ENCODE measurements at regions of chr6 and their contacts with region 1.

Region 1: DNA sequence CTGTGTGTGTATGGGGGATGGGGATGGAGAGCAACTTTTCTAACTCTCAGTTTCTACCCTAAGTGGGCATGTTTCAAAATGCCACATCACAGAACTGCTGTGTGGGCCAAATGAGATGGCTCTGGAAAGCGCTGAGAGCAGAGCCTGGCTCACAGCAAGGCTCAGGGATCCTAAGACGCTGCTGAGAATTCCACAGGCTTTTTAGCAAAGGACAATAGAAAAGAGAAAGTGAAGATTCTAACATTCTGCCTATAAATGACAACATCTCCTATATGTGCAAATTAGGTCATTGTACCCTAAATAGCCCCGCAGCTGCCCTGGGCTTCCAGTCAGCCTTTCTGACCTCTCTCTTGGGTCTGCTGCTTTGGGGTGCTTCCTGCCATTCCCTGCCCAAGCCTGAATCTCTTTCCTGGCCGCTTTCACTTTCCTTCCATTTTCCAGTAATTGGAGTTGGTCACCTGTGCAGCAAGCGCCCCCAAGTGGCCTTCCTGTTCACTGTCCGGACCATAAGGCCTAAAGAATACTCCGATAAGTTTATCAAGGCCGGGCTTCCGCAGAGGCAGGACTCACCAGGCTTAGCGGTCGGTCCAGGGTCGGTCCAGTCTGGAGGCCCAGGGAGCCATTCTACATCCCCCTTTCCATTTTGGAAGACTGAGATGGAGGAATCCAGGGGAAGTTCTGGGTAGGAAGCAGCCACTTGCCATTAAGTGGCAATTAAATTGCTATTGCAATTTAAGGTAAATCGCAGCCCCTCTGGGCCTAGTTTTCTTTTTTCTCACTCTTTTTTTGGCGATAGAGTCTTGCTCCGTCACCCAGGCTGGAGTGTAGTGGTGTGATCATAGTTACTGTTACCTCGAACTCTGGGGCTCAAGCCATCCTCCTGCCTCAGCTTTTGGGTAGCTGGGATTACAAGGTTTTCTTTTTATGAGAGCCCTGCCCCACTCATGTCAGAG is 6.6 kb upstream of the DDR1 start:
- DNase-seq: peak; percentile 62 to 71 (median 68)
- H3K4me3 ChIP-seq: peak overlapping the region; percentile 40 to 43
- H3K4me3 Mint-ChIP-seq: peak overlapping the region; percentile 61 to 91 (median 82)
- H3K27ac ChIP-seq: no peak overlapping the region
- H3K27ac Mint-ChIP-seq: peak overlapping the region in 6 of 7 donors; percentile 21 to 91 (median 72)
- H3K4me1 ChIP-seq: peaks cover 10% of the 10 kb centered on the region
- H3K4me1 Mint-ChIP-seq: peaks cover 7 to 27% (median 11%) of the 10 kb centered on the region in 4 donors
- H3K27me3 ChIP-seq: no peaks in the 10 kb centered on the region
- H3K27me3 Mint-ChIP-seq: no peaks in the 10 kb centered on the region

Region 2: GRCh38 chr6:30678964-30679726 is 198.6 kb before region 1 on chr6:
- CTCF ChIA-PET with region 1: interaction called, 5 read pairs
- POLR2A ChIA-PET with region 1: interaction called, 4 read pairs
- intact Hi-C with region 1: loop called (anchors 1 kb)
- DNase-seq: peak; percentile 87 to 92 (median 89)
- H3K4me3 ChIP-seq: peak overlapping the region; percentile 70 to 93
- H3K4me3 Mint-ChIP-seq: peak overlapping the region; percentile 97 to 100 (median 99)
- H3K27ac ChIP-seq: peak overlapping the region; percentile 94
- H3K27ac Mint-ChIP-seq: peak overlapping the region; percentile 88 to 99 (median 91)
- H3K4me1 ChIP-seq: peaks cover 38% of the 10 kb centered on the region
- H3K4me1 Mint-ChIP-seq: peaks cover 17 to 57% (median 34%) of the 10 kb centered on the region in 4 donors
- H3K27me3 ChIP-seq: no peaks in the 10 kb centered on the region
- H3K27me3 Mint-ChIP-seq: no peaks in the 10 kb centered on the region

Region 3: GRCh38 chr6:30776390-30777154 is 101.1 kb before region 1 on chr6:
- CTCF ChIA-PET with region 1: no interaction called
- POLR2A ChIA-PET with region 1: no interaction called
- intact Hi-C with region 1: no loop called
- DNase-seq: no peak
- H3K4me3 ChIP-seq: no peak overlapping the region
- H3K4me3 Mint-ChIP-seq: no peak overlapping the region
- H3K27ac ChIP-seq: no peak overlapping the region
- H3K27ac Mint-ChIP-seq: no peak overlapping the region
- H3K4me1 ChIP-seq: no peaks in the 10 kb centered on the region
- H3K4me1 Mint-ChIP-seq: peaks cover 1 to 18% (median 9%) of the 10 kb centered on the region in 4 donors
- H3K27me3 ChIP-seq: no peaks in the 10 kb centered on the region
- H3K27me3 Mint-ChIP-seq: no peaks in the 10 kb centered on the region

Region 4: DNA sequence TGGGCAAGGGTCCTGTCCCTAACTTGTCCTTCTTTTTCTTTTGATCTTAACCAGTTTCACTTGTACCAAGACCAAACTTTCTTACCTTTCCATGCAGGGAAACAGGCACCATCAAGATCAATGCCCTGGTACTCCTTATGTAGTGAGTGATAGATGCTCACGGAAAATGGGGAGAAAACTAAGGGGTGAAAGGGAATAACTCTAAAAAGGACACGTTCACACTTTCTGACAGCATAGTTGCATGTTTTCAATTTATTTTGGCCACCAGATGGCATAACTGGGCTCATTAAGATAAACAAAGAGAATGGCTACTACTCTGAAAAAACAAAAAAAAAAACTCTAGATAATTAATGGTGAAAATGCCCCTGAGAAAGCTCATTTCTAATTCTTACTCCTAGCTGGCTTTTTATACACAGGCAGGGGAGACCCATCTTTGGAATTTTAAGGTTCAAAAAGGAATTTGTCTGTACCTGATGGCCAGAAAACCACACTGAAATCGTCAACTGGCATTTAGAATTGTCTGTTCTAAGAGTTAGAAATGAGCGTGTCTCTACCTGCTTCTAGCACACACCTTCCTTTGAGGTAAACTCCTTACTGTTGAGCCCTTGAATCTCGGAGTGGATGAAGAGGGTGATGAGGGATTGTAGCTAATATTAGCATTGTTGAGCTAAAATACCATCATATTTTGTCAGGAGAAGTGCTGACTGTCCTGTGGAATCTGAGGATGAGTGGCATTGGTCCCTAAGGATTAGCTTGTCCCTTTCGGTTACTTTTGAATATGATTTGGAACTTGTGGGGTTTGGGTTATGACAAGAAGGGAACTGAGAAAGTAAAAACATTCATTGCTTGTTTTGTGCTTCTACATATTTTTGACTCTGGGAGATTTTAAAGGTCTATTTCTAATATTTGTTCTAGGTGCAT is 55.6 kb before region 1 on chr6:
- CTCF ChIA-PET with region 1: interaction called, 262 read pairs
- POLR2A ChIA-PET with region 1: interaction called, 3 read pairs
- intact Hi-C with region 1: loop called (anchors 1 kb)
- DNase-seq: peak in 3 of 5 donors; percentile 26 to 38 (median 37)
- H3K4me3 ChIP-seq: no peak overlapping the region
- H3K4me3 Mint-ChIP-seq: peak overlapping the region in 1 of 8 donors; percentile 23
- H3K27ac ChIP-seq: no peak overlapping the region
- H3K27ac Mint-ChIP-seq: peak overlapping the region; percentile 39 to 83 (median 65)
- H3K4me1 ChIP-seq: peaks cover 46% of the 10 kb centered on the region
- H3K4me1 Mint-ChIP-seq: peaks cover 48 to 87% (median 61%) of the 10 kb centered on the region in 4 donors
- H3K27me3 ChIP-seq: no peaks in the 10 kb centered on the region
- H3K27me3 Mint-ChIP-seq: no peaks in the 10 kb centered on the region

Region 5: GRCh38 chr6:30942338-30943060 is 64.8 kb after region 1 on chr6:
- CTCF ChIA-PET with region 1: no interaction called
- POLR2A ChIA-PET with region 1: no interaction called
- intact Hi-C with region 1: no loop called
- DNase-seq: no peak
- H3K4me3 ChIP-seq: no peak overlapping the region
- H3K4me3 Mint-ChIP-seq: no peak overlapping the region
- H3K27ac ChIP-seq: no peak overlapping the region
- H3K27ac Mint-ChIP-seq: no peak overlapping the region
- H3K4me1 ChIP-seq: no peaks in the 10 kb centered on the region
- H3K4me1 Mint-ChIP-seq: peaks cover 0 to 3% (median 0%) of the 10 kb centered on the region in 4 donors
- H3K27me3 ChIP-seq: peaks cover 20% of the 10 kb centered on the region
- H3K27me3 Mint-ChIP-seq: peaks cover 31 to 59% of the 10 kb centered on the region in 2 donors

Region 6: GRCh38 chr6:30981942-30982772 is 104.5 kb after region 1 on chr6:
- CTCF ChIA-PET with region 1: no interaction called
- POLR2A ChIA-PET with region 1: no interaction called
- intact Hi-C with region 1: no loop called
- DNase-seq: no peak
- H3K4me3 ChIP-seq: no peak overlapping the region
- H3K4me3 Mint-ChIP-seq: peak overlapping the region in 1 of 8 donors; percentile 13
- H3K27ac ChIP-seq: no peak overlapping the region
- H3K27ac Mint-ChIP-seq: peak overlapping the region in 1 of 7 donors; percentile 10
- H3K4me1 ChIP-seq: no peaks in the 10 kb centered on the region
- H3K4me1 Mint-ChIP-seq: peaks cover 0 to 2% (median under 1%) of the 10 kb centered on the region in 4 donors
- H3K27me3 ChIP-seq: no peaks in the 10 kb centered on the region
- H3K27me3 Mint-ChIP-seq: peaks cover 29 to 33% of the 10 kb centered on the region in 2 donors

Region 7: DNA sequence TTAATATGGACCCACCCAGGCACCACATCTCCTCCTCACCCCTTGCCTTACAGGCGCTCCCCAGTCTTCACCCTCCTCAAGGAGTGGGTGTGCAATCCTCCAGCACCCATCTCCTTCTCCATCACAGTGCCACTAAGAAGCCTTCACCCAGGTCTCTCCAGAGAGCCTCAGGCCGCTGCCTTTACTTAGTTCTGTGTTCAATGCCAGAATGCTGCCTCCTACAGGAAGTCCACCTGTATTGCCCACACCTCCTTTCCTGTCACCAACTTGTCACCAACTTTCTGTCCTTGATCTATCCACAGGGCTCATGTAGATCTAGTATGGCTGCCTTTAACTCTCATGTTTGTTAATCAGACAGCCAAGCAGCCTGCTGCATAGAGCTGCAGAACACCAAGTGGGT is 707.8 kb after region 1 on chr6:
- CTCF ChIA-PET with region 1: no interaction called
- POLR2A ChIA-PET with region 1: no interaction called
- intact Hi-C with region 1: no loop called
- DNase-seq: peak; percentile 56 to 66 (median 56)
- H3K4me3 ChIP-seq: peak overlapping the region; percentile 7 to 17
- H3K4me3 Mint-ChIP-seq: peak overlapping the region; percentile 74 to 91 (median 83)
- H3K27ac ChIP-seq: peak overlapping the region; percentile 62
- H3K27ac Mint-ChIP-seq: peak overlapping the region; percentile 92 to 98 (median 96)
- H3K4me1 ChIP-seq: peaks cover 74% of the 10 kb centered on the region
- H3K4me1 Mint-ChIP-seq: peaks cover 39 to 97% (median 62%) of the 10 kb centered on the region in 4 donors
- H3K27me3 ChIP-seq: no peaks in the 10 kb centered on the region
- H3K27me3 Mint-ChIP-seq: no peaks in the 10 kb centered on the region